Activated T-helper 1 cell treated with anti-CD3 and anti-CD28 coated beads, Interleukin-12 subunit alpha, Interleukin-12 subunit beta, Interleukin-2, Interleukin-4 antibody, amounts not matched to agents 30 ng/mL and 10 ng/mL and 1 ng/mL, durations not matched to agents 14 hours and 24 hours and 36 hours (primary cell): ENCODE measurements at regions of chr16 and their contacts with region 1.

Region 1: GRCh38 chr16:2911580-2912329 is at the start of gene FLYWCH1:
- DNase-seq: peak; percentile 99
- H3K4me3 Mint-ChIP-seq: peak within 1 kb of the TSS; percentile 86
- H3K27ac Mint-ChIP-seq: peak within 1 kb of the TSS; percentile 76
- H3K4me1 Mint-ChIP-seq: peaks cover 24% of the 10 kb centered on the region
- H3K27me3 Mint-ChIP-seq: peaks cover 6% of the 10 kb centered on the region
- total RNA-seq, gene FLYWCH1: 61.1 and 65.7 TPM in 2 replicates

Region 2: GRCh38 chr16:2926650-2927646 is 15.2 kb after region 1 on chr16:
- intact Hi-C with region 1: loop called (anchors 1 kb)
- DNase-seq: peak; percentile 83
- H3K4me3 Mint-ChIP-seq: no peak overlapping the region
- H3K27ac Mint-ChIP-seq: no peak overlapping the region
- H3K4me1 Mint-ChIP-seq: peaks cover 23% of the 10 kb centered on the region
- H3K27me3 Mint-ChIP-seq: no peaks in the 10 kb centered on the region

Region 3: GRCh38 chr16:2937170-2937569 is 25.4 kb after region 1 on chr16:
- intact Hi-C with region 1: no loop called
- DNase-seq: no peak
- H3K4me3 Mint-ChIP-seq: no peak overlapping the region
- H3K27ac Mint-ChIP-seq: no peak overlapping the region
- H3K4me1 Mint-ChIP-seq: peaks cover 9% of the 10 kb centered on the region
- H3K27me3 Mint-ChIP-seq: no peaks in the 10 kb centered on the region

Region 4: GRCh38 chr16:2955779-2956578 is 44.2 kb after region 1 on chr16:
- intact Hi-C with region 1: no loop called
- DNase-seq: no peak
- H3K4me3 Mint-ChIP-seq: no peak overlapping the region
- H3K27ac Mint-ChIP-seq: no peak overlapping the region
- H3K4me1 Mint-ChIP-seq: no peaks in the 10 kb centered on the region
- H3K27me3 Mint-ChIP-seq: no peaks in the 10 kb centered on the region